ENCODE measurements at regions of chr10 and their contacts with region 1.

Region 1: DNA sequence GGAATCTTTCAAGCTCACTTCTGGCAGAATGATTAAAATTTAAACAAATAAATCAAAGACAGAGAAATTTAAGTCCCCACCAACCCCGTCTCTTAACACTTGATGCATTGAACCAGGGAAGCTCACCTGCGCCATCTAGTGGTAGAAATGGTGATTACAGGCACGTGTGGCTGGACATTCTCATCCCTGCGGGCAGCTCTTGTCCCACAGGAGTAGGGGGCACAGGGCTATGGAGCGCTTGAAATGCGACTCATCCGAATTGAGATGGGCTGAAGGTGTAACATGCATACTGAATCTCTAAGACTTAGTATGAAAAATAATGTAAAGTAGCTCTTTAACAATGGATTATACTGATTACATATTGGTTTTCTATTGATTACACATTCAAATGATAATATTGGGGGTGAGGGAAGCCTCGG is 24.8 kb upstream of the SLIT1 start:
- DNase-seq: no peak
- H3K4me3 ChIP-seq: no peak overlapping the region
- H3K27me3 ChIP-seq: no peaks in the 10 kb centered on the region
- CTCF ChIP-seq: peak; percentile 95

Region 2: GRCh38 chr10:96374985-96375830 is 835.3 kb before region 1 on chr10:
- CTCF ChIA-PET with region 1: interaction called, 10 read pairs
- POLR2A ChIA-PET with region 1: no interaction called
- DNase-seq: no peak
- H3K4me3 ChIP-seq: peak overlapping the region; percentile 41
- H3K27me3 ChIP-seq: no peaks in the 10 kb centered on the region; the same call in 1 of the 2 replicates
- CTCF ChIP-seq: peak; percentile 100

Region 3: DNA sequence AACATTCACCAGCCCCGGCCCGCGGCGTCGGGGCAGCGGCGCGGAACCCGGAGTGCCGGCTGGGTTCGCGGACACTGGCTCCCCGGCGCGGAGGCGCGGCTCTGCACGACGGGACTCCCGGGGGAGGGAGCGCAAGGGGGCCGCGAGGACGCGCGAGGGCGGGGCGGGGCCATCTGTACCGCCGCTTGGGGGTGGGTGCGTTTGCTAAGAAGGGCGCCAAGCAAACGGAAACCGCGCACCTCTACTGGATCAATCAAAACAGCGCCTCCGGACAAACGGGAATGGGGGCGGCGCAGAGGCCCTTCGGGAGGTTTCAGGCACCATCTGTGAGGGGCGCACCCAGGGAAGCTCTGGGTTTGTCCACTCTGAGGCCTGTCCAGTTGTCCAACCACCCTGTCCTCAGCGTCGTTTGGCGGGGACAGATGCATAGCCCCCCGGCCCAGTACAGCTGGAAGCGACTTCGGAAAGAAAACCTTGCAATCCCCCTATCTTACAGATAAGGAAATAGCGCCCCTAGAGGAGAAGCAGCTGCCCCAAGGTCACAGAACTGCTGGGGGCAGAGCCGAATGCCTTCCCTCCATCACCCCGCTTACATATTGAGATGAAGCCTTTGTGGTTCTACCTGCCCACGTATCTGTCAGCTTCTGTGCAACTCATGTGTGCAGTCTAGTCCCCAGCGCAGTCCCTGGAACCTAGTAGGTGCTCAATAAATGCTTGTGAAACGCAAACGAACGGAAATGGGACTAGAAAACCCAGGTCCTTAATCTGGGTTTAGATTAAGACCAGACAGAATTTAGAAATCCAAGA is 14.1 kb before region 1 on chr10:
- CTCF ChIA-PET with region 1: interaction called, 125 read pairs
- POLR2A ChIA-PET with region 1: no interaction called
- DNase-seq: no peak
- H3K4me3 ChIP-seq: peak overlapping the region; percentile 44
- H3K27me3 ChIP-seq: peaks cover 10% of the 10 kb centered on the region
- CTCF ChIP-seq: peak; percentile 76

Region 4: DNA sequence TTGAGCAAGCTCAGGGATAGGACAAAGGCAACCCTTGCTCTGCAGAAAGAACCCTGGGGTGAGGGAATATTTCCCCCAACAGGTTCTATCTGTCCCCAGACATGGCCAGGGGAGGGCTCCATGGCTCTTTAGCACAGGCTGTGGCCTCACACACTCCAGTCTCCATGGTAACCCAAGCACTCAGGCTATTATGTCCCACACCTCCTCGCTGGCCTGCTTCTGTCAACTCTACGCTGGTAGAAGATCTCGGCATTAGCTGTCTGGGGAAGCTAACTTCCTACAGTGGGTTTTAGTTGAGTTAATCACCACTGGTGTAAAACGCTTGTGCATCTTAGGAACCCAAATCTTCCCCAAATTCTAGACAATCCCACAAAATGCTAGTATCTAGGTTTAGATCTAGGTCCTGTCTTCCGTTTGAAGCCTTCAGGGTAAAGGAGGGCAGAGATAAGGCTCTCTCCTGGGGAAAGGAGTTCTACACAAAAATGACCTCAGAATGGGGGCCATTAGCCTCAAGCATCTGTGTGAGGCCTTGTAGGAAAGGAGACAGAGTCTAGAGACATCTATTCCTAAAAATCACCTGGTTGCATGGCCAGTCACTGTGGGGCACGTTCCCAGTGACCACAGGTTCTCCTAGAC is 11.9 kb after region 1 on chr10:
- CTCF ChIA-PET with region 1: interaction called, 35 read pairs
- POLR2A ChIA-PET with region 1: no interaction called
- DNase-seq: no peak
- H3K4me3 ChIP-seq: no peak overlapping the region
- H3K27me3 ChIP-seq: no peaks in the 10 kb centered on the region
- CTCF ChIP-seq: no peak

Region 5: GRCh38 chr10:97234400-97234799 is 23.8 kb after region 1 on chr10:
- CTCF ChIA-PET with region 1: interaction called, 12 read pairs
- POLR2A ChIA-PET with region 1: no interaction called
- DNase-seq: no peak
- H3K4me3 ChIP-seq: no peak overlapping the region
- H3K27me3 ChIP-seq: no peaks in the 10 kb centered on the region
- CTCF ChIP-seq: peak; percentile 60

Region 6: DNA sequence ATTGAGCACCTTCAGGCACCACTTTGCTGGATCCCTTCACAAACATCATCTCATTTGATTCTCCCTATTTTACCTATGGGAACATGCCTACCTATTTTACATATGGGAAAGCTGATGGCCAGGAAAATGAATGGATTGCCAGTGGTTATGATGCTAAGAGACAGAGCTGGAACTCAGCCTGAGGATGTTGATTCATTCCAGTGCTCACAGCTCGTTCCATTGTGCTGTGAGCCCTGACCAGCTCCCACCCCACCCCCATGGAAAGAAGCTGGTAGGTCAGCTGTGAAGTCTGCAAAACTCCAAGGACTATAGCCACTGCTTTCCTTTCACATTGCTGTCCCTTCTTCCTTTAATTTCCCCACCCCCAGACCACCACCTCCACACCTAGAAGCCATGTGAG is 297.8 kb after region 1 on chr10:
- CTCF ChIA-PET with region 1: no interaction called
- POLR2A ChIA-PET with region 1: no interaction called
- DNase-seq: no peak
- H3K4me3 ChIP-seq: no peak overlapping the region
- H3K27me3 ChIP-seq: no peaks in the 10 kb centered on the region
- CTCF ChIP-seq: no peak

Measured in BJ (cell line).